ENCODE measurements at regions of chr7 and their contacts with region 1.

Region 1: GRCh38 chr7:115851291-115851690 is 179.3 kb downstream of the TFEC start:
- DNase-seq: peak; percentile 8
- ATAC-seq: no peak
- H3K4me3 ChIP-seq: no peak overlapping the region
- H3K27ac ChIP-seq: no peak overlapping the region
- H3K4me1 ChIP-seq: no peaks in the 10 kb centered on the region
- H3K27me3 ChIP-seq: no peaks in the 10 kb centered on the region
- CTCF ChIP-seq: peak; percentile 54; the same call in 1 of the 2 replicates

Region 2: GRCh38 chr7:115654384-115655214 is 196.7 kb before region 1 on chr7:
- CTCF ChIA-PET with region 1: interaction called, 10 read pairs
- POLR2A ChIA-PET with region 1: no interaction called
- in situ Hi-C with region 1: no loop called
- intact Hi-C with region 1: no loop called
- DNase-seq: no peak
- ATAC-seq: no peak
- H3K4me3 ChIP-seq: no peak overlapping the region
- H3K27ac ChIP-seq: no peak overlapping the region
- H3K4me1 ChIP-seq: no peaks in the 10 kb centered on the region
- H3K27me3 ChIP-seq: no peaks in the 10 kb centered on the region
- CTCF ChIP-seq: no peak

Region 3: GRCh38 chr7:116041615-116042014 is 190.3 kb after region 1 on chr7:
- CTCF ChIA-PET with region 1: no interaction called
- POLR2A ChIA-PET with region 1: no interaction called
- in situ Hi-C with region 1: no loop called
- intact Hi-C with region 1: no loop called
- DNase-seq: no peak
- ATAC-seq: no peak
- H3K4me3 ChIP-seq: no peak overlapping the region
- H3K27ac ChIP-seq: no peak overlapping the region
- H3K4me1 ChIP-seq: no peaks in the 10 kb centered on the region
- H3K27me3 ChIP-seq: peaks cover 2% of the 10 kb centered on the region
- CTCF ChIP-seq: no peak

Measured in Panc1 (cell line).